Activated T-helper 1 cell treated with anti-CD3 and anti-CD28 coated beads, Interleukin-12 subunit alpha, Interleukin-12 subunit beta, Interleukin-2, Interleukin-4 antibody, amounts not matched to agents 30 ng/mL and 10 ng/mL and 1 ng/mL, durations not matched to agents 14 hours and 24 hours and 36 hours (primary cell): ENCODE measurements at regions of chr14 and their contacts with region 1.

Region 1: GRCh38 chr14:70640938-70641547 is 673 bp upstream of the TTC9 start:
- DNase-seq: peak; percentile 37
- H3K4me3 Mint-ChIP-seq: peak overlapping the region; percentile 97
- H3K27ac Mint-ChIP-seq: peak overlapping the region; percentile 88
- H3K4me1 Mint-ChIP-seq: peaks cover 45% of the 10 kb centered on the region
- H3K27me3 Mint-ChIP-seq: peaks cover 9% of the 10 kb centered on the region

Region 2: GRCh38 chr14:70425354-70425753 is 215.7 kb before region 1 on chr14:
- intact Hi-C with region 1: no loop called
- DNase-seq: no peak
- H3K4me3 Mint-ChIP-seq: no peak overlapping the region
- H3K27ac Mint-ChIP-seq: no peak overlapping the region
- H3K4me1 Mint-ChIP-seq: no peaks in the 10 kb centered on the region
- H3K27me3 Mint-ChIP-seq: peaks cover 6% of the 10 kb centered on the region

Region 3: DNA sequence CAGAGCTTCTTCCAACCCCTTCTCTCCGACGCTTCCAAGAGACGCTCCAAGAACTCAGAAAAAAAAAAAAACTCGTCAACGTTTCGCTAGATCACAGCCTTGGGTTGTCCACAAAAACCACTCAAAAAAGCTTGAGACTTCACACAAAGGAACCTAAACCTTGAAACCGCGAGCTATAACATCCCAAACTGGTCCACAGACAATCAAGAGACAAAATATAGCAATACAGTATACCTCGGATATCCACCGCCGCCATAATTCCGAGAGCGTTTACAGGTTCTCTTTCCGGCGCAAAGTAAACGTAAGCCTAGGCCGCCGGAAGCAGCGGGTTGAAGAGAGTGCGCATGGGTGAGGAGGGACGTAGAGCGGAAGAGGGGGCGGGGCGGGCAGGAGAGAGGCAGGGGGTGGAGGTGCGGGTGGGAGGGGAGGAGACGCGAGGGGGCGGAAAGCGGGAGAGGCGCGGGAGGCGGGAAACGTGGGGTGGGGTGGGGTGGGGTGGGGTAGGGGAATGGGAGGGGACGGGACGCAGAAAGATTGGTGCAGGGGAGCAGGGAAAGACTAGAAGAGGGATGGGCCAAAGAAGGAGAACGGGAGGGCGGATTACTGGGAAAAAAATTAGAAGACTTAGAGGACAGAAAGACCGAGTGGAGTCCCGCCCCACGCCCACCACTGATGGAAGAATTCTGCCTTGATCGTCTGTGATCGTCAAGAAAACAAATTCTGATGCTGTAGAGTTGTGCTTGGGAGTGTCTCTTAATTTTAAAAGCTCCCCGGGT is 40.5 kb before region 1 on chr14 and contains the start of gene MED6:
- intact Hi-C with region 1: loop called (anchors 1 kb)
- DNase-seq: peak; percentile 89
- H3K4me3 Mint-ChIP-seq: peak within 1 kb of the TSS; percentile 100
- H3K27ac Mint-ChIP-seq: peak within 1 kb of the TSS; percentile 92
- H3K4me1 Mint-ChIP-seq: peaks cover 18% of the 10 kb centered on the region
- H3K27me3 Mint-ChIP-seq: peaks cover 4% of the 10 kb centered on the region
- total RNA-seq, gene MED6: 59.3 and 63.7 TPM in 2 replicates

Region 4: DNA sequence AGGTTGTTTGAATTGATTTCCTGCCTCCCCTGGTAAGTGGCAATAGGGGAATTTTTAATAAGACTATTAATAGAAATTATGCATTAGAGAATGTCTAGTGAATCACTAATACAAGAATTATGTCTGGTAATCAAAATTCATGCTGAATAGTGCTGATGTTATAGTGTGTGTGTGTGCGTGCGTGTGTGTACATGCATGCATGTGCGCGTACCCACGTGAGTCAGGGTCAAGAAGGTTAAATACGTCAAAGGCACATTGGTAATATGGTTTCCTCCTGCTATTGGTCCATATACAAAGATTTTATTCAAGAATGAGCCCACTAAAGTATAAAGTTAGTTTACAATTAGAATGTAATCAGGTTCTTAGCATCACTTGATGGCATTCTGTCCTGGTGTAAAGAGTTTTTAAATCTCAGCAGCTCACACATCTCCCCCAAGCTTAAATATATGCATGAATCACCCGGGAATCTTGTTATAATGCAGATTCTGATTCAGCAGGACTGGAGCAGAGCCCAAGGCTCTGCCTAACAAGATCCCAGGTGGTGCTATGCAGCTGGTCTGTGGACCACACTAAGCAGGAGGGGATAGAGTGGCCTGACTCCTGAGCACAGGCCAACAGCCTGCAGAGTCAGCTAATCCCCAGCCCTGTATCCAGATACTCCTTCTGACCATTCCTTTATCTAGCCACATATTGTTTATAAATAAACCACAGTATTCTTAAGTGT is 44.6 kb after region 1 on chr14:
- intact Hi-C with region 1: no loop called
- DNase-seq: no peak
- H3K4me3 Mint-ChIP-seq: no peak overlapping the region
- H3K27ac Mint-ChIP-seq: no peak overlapping the region
- H3K4me1 Mint-ChIP-seq: no peaks in the 10 kb centered on the region
- H3K27me3 Mint-ChIP-seq: no peaks in the 10 kb centered on the region

Region 5: GRCh38 chr14:70972107-70972976 is 331.3 kb after region 1 on chr14:
- intact Hi-C with region 1: loop called (anchors 5 kb)
- DNase-seq: peak; percentile 69
- H3K4me3 Mint-ChIP-seq: no peak overlapping the region
- H3K27ac Mint-ChIP-seq: no peak overlapping the region
- H3K4me1 Mint-ChIP-seq: peaks cover 14% of the 10 kb centered on the region
- H3K27me3 Mint-ChIP-seq: no peaks in the 10 kb centered on the region